WTC11 (cell line): ENCODE measurements at regions of chr17 and their contacts with region 1.

Region 1: GRCh38 chr17:6701719-6702118 is 11.4 kb downstream of the SLC13A5 start:
- DNase-seq: peak; percentile 86
- ATAC-seq: peak; percentile 99
- H3K4me3 Mint-ChIP-seq: no peak overlapping the region
- H3K27ac Mint-ChIP-seq: no peak overlapping the region
- H3K4me1 Mint-ChIP-seq: peaks cover 6% of the 10 kb centered on the region
- H3K27me3 Mint-ChIP-seq: no peaks in the 10 kb centered on the region; the same call in 1 of the 2 replicates
- CTCF ChIP-seq: peak; percentile 55

Region 2: GRCh38 chr17:6666077-6666521 is 35.6 kb before region 1 on chr17:
- CTCF ChIA-PET with region 1: interaction called, 27 read pairs
- POLR2A ChIA-PET with region 1: no interaction called
- DNase-seq: peak; percentile 78
- ATAC-seq: peak; percentile 95
- H3K4me3 Mint-ChIP-seq: no peak overlapping the region
- H3K27ac Mint-ChIP-seq: no peak overlapping the region
- H3K4me1 Mint-ChIP-seq: peaks cover 12% of the 10 kb centered on the region
- H3K27me3 Mint-ChIP-seq: peaks cover 41% of the 10 kb centered on the region
- CTCF ChIP-seq: peak; percentile 68

Region 3: GRCh38 chr17:6690641-6691040 is 11.1 kb before region 1 on chr17:
- CTCF ChIA-PET with region 1: interaction called, 14 read pairs
- POLR2A ChIA-PET with region 1: no interaction called
- DNase-seq: no peak
- ATAC-seq: no peak
- H3K4me3 Mint-ChIP-seq: no peak overlapping the region
- H3K27ac Mint-ChIP-seq: no peak overlapping the region
- H3K4me1 Mint-ChIP-seq: no peaks in the 10 kb centered on the region
- H3K27me3 Mint-ChIP-seq: no peaks in the 10 kb centered on the region; the same call in 1 of the 2 replicates
- CTCF ChIP-seq: no peak

Region 4: GRCh38 chr17:6853764-6854442 is 152.2 kb after region 1 on chr17:
- CTCF ChIA-PET with region 1: interaction called, 10 read pairs
- POLR2A ChIA-PET with region 1: no interaction called
- DNase-seq: peak; percentile 64
- ATAC-seq: peak; percentile 97
- H3K4me3 Mint-ChIP-seq: peak overlapping the region; percentile 78
- H3K27ac Mint-ChIP-seq: peak overlapping the region; percentile 66
- H3K4me1 Mint-ChIP-seq: peaks cover 23% of the 10 kb centered on the region
- H3K27me3 Mint-ChIP-seq: peaks cover 14% of the 10 kb centered on the region
- CTCF ChIP-seq: peak; percentile 72